Activated T-helper 1 cell treated with anti-CD3 and anti-CD28 coated beads, Interleukin-12 subunit alpha, Interleukin-12 subunit beta, Interleukin-2, Interleukin-4 antibody, amounts not matched to agents 30 ng/mL and 10 ng/mL and 1 ng/mL, durations not matched to agents 14 hours and 24 hours and 36 hours (primary cell): ENCODE measurements at regions of chr9 and their contacts with region 1.

Region 1: DNA sequence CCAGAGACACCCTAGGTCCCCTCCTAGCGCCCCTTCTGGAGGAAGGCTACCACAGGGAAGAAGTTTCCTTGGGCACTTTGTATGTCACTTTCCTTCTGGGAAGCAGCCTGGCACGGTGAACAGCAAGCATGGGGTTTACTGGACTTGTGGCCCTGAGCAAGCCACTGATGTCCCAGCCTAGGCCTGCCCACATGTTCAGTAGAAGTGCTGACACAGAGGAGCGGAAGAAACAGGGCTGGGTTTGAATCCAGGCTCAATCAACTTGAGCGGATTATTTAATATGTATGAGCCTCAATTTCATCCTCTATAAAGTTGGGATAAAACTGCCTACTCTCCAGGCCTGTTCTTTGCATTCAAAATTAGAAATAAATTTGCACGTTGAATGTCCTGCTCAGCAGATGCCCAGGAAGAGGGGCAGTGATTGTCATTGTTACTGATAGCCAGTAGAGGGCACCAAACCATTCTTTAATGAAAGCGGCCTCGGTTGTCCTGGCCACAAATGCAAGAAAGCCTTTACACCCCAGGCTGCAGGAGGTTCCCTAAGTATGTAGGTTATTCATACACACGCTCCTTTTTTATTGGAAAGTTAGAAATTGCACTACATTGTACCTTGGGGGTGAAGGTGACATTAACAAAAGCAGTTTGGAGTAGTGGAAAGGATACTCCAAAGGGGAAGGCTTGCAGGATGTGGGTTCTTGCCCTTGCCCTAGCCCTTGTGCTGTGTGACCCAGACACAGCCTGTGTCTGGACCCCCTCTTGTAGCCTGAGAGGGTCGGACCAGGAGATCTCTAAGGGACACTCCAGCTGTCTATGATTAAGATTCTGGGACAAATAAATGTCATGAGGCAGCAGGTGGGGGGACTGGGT is 13.4 kb upstream of the XPA start:
- DNase-seq: peak; percentile 31
- H3K4me3 Mint-ChIP-seq: no peak overlapping the region
- H3K27ac Mint-ChIP-seq: no peak overlapping the region
- H3K4me1 Mint-ChIP-seq: peaks cover 29% of the 10 kb centered on the region
- H3K27me3 Mint-ChIP-seq: peaks cover 15% of the 10 kb centered on the region

Region 2: DNA sequence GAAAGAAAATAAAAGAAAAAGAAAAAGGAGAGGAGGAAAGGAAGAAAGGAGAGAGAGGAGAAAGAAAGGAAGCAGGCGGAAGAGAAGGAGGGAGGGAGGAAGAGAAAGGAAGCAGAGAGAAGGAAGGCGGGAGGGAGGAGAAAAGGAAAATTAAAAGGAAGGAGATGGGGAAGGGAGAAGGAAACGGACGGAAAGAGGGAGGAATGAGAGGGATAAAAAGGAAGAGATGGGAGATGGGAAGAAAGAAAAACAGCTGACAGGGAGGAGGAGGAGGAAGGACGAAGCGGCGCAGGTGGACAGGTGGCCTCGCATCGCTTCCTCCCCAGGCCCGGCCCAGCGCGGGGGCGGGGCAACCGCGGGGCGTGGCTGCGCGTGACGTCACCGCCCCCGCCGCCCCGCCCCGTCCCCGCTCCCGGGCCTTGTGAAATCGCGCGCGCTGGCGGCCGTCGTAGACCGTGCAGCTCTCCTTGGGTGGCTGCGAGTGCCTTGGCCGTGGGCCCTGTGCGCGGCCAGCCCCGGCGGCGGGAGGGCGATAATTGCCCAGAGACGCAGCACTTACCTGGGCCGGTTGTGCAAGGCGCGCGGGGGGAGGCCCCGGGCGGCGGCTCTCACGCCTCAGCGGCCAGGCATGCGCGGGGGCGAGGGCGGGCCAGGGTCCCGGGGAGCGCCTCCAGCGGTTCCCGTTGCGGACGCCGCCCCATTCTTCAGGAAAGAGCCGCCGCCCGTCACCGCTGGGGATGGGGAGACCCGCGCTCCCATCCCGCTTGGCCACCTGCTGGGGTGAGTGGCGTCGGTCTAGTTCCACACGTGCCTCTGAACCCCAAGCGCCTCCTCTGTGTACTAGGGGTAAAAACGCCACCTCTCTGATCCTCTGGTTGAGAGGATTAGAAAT is 92.8 kb after region 1 on chr9:
- intact Hi-C with region 1: loop called (anchors 2 kb)
- DNase-seq: peak; percentile 66
- H3K4me3 Mint-ChIP-seq: peak overlapping the region; percentile 79
- H3K27ac Mint-ChIP-seq: peak overlapping the region; percentile 67
- H3K4me1 Mint-ChIP-seq: peaks cover 17% of the 10 kb centered on the region
- H3K27me3 Mint-ChIP-seq: peaks cover 25% of the 10 kb centered on the region

Region 3: DNA sequence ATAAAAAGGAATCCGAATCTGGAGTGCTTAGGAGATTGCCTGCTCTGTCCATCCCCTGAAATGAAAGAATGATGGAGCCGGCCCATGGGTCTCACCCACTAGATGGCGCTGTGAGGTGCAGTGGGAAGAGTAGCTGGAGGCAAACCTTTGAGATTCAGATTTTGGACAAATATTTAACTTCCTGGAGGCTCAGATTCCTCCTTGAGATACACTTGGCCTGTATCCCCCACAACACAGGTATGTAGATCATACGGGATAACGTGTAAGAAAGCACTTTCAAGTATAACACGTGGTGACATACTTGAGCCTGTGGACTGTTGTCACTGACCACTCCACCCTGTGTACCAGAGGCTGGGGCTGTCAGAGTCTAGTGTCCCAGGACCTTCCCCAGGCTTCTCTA is 179.4 kb after region 1 on chr9:
- intact Hi-C with region 1: loop called (anchors 1 kb)
- DNase-seq: peak; percentile 51
- H3K4me3 Mint-ChIP-seq: no peak overlapping the region
- H3K27ac Mint-ChIP-seq: no peak overlapping the region
- H3K4me1 Mint-ChIP-seq: peaks cover 6% of the 10 kb centered on the region
- H3K27me3 Mint-ChIP-seq: peaks cover 4% of the 10 kb centered on the region

Region 4: DNA sequence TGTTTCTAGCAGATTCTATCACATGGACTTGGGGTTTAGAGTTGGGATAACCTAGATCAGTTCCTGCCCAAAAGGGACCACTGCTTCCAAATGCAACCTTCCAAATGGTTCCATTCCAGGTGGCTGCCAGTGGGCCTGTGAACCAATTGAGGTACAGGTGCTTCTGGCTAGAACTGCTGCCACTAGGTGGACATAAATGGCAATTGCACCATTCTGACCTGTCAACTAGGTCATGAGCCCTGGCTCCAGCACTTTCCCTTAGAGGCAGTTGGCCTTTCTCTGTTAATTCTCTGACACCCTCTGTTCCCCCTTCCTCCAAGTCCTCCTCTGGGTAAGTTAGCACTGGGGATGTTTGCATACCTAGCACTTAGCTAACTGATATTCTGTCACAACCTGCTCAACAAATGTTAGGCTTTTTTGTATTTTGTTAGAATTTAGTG is 244.0 kb after region 1 on chr9:
- intact Hi-C with region 1: loop called (anchors 1 kb)
- DNase-seq: peak; percentile 35
- H3K4me3 Mint-ChIP-seq: no peak overlapping the region
- H3K27ac Mint-ChIP-seq: no peak overlapping the region
- H3K4me1 Mint-ChIP-seq: no peaks in the 10 kb centered on the region
- H3K27me3 Mint-ChIP-seq: peaks cover 8% of the 10 kb centered on the region

Region 5: GRCh38 chr9:98263482-98264357 is 553.1 kb after region 1 on chr9:
- intact Hi-C with region 1: loop called (anchors 5 kb)
- DNase-seq: peak; percentile 72
- H3K4me3 Mint-ChIP-seq: no peak overlapping the region
- H3K27ac Mint-ChIP-seq: no peak overlapping the region
- H3K4me1 Mint-ChIP-seq: no peaks in the 10 kb centered on the region
- H3K27me3 Mint-ChIP-seq: peaks cover 9% of the 10 kb centered on the region